PC-9 (cell line): ENCODE measurements at regions of chr2 and their contacts with region 1.

Region 1: DNA sequence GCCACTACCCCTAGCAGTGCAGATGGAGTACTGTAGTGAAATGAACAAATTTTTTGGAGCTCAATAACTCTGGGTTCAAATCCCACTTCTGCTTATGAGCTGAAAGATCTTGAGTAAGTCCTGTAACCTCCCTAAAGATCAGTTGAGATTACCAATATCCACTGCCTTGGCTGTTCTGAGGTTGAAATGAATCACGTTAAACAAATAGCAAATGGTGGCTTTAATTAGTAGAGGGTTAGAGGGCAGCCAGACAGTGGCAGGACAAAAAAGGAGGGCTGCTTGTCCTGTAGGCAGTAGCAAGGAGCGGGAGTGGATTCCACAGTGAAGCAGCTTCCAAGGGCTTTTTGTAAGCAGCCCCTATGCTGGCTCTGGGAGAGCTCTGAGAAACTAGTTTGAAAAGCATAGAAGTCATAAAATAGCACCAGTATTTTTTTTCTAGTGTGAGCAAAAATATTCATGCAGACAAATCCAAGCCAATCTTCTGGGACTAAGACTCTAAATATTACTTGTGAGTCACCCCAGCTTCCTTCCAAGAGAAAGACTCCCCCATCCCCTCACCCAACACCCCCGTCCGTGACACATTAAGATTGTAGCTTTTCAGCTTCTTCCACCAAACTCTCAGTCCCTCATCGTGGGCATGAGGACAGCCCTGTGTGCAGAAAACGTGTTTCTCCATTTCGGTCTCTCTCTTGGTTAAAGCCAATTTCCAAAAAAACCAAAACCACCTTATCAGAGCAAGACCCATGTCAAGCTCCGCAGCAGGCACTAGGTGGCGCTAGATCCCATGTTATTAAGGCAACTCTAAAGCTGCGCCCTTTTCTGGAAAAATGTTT is 123.5 kb upstream of the LGALSL start:
- DNase-seq: peak; percentile 76 to 77
- H3K4me3 ChIP-seq: peak overlapping the region; percentile 44; the same call in 1 of the 2 replicates
- H3K27ac ChIP-seq: no peak overlapping the region; the same call in 1 of the 2 replicates
- H3K4me1 ChIP-seq: peaks cover 22% of the 10 kb centered on the region
- H3K27me3 ChIP-seq: no peaks in the 10 kb centered on the region
- CTCF ChIP-seq: peak; percentile 97

Region 2: DNA sequence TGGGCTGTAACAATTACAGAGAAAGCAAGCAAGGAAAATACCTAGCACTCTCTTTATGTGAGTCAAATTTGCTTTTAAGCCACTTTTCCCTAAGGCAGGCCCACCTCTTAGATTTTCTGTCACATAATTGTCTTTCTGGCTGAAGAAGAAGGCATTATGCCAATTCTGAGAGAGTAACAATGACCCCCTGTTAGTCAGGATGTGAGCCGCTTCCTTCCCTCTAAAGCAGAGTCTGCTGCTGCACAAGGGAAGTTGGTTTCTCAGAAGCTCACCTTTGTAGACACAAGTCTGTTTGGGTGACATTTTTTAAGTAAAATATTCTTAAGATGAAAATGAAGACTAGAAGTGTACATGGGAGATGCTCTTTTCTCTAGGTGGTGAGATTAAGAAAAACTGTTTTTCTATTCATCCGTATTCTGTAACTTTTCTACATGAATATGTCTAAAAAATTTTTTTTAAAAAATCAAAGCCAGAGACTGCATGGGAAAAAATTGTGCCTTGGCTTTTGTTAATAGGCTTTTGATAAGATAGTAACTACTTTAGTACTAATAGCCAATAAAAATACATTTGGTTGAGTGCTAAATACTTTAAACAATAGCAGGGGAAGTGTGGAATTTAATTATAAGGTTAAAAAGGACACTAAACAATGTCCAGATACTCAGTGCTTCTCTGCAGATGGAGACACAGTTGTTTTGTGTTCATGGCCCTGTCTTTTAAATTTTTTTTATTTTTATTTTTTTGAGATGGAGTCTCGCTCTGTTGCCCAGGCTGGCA is 277.8 kb before region 1 on chr2:
- CTCF ChIA-PET with region 1: interaction called, 22 read pairs
- POLR2A ChIA-PET with region 1: no interaction called
- intact Hi-C with region 1: loop called (anchors 1 kb)
- DNase-seq: no peak
- H3K4me3 ChIP-seq: no peak overlapping the region
- H3K27ac ChIP-seq: no peak overlapping the region
- H3K4me1 ChIP-seq: peaks cover 4% of the 10 kb centered on the region; the same call in 1 of the 2 replicates
- H3K27me3 ChIP-seq: no peaks in the 10 kb centered on the region
- CTCF ChIP-seq: no peak

Region 3: DNA sequence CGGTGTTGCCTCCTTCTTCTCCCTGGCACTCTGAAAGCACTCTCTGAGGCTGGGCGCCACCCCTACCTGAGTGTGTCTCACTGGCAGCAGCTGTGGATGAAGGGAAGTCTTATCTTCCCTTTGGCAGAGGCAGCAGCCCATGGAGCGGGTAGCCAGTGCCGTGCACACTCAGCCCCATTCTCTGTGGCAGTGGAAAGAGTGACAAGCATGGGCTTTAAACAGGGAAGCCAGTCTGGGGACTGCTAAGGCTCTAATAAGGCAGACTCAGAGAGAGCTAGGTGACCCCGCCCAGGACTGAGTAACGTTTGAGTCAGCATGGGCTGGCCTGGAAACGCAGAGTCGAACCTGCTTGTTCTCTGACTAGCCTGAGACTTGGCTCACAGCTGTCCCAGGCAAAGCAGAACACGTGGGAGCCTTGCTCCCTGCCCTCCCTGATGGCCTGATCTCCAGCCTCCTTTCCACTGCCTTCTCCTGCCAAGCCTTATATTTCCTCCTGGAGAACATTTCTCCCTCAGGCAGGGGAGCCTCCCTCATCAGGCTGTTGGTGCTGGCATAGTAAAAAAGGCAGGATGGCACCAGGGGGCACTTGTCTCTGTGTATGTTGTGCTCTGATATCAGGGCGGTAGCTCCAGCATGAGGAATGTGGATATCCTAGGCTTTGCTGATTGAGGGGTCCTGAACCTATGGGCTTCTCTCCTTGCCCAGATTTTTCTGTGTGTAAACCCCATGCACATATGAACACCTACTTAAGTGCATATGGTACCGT is 29.6 kb after region 1 on chr2:
- CTCF ChIA-PET with region 1: interaction called, 5 read pairs
- POLR2A ChIA-PET with region 1: no interaction called
- intact Hi-C with region 1: loop called (anchors 2 kb)
- DNase-seq: peak; percentile 93 to 98
- H3K4me3 ChIP-seq: peak overlapping the region; percentile 29; the same call in 1 of the 2 replicates
- H3K27ac ChIP-seq: peak overlapping the region; percentile 94
- H3K4me1 ChIP-seq: peaks cover 67% of the 10 kb centered on the region
- H3K27me3 ChIP-seq: no peaks in the 10 kb centered on the region
- CTCF ChIP-seq: peak; percentile 39; the same call in 1 of the 2 replicates

Region 4: GRCh38 chr2:64562148-64562784 is 231.8 kb after region 1 on chr2:
- CTCF ChIA-PET with region 1: interaction called, 3 read pairs
- POLR2A ChIA-PET with region 1: interaction called, 7 read pairs
- intact Hi-C with region 1: loop called (anchors 1 kb)
- DNase-seq: no peak
- H3K4me3 ChIP-seq: no peak overlapping the region
- H3K27ac ChIP-seq: no peak overlapping the region
- H3K4me1 ChIP-seq: no peaks in the 10 kb centered on the region
- H3K27me3 ChIP-seq: no peaks in the 10 kb centered on the region
- CTCF ChIP-seq: peak; percentile 69

Region 5: GRCh38 chr2:64914735-64915509 is 584.4 kb after region 1 on chr2:
- CTCF ChIA-PET with region 1: interaction called, 3 read pairs
- POLR2A ChIA-PET with region 1: no interaction called
- intact Hi-C with region 1: loop called (anchors 2 kb)
- DNase-seq: no peak
- H3K4me3 ChIP-seq: no peak overlapping the region
- H3K27ac ChIP-seq: no peak overlapping the region
- H3K4me1 ChIP-seq: no peaks in the 10 kb centered on the region
- H3K27me3 ChIP-seq: no peaks in the 10 kb centered on the region
- CTCF ChIP-seq: no peak

Region 6: DNA sequence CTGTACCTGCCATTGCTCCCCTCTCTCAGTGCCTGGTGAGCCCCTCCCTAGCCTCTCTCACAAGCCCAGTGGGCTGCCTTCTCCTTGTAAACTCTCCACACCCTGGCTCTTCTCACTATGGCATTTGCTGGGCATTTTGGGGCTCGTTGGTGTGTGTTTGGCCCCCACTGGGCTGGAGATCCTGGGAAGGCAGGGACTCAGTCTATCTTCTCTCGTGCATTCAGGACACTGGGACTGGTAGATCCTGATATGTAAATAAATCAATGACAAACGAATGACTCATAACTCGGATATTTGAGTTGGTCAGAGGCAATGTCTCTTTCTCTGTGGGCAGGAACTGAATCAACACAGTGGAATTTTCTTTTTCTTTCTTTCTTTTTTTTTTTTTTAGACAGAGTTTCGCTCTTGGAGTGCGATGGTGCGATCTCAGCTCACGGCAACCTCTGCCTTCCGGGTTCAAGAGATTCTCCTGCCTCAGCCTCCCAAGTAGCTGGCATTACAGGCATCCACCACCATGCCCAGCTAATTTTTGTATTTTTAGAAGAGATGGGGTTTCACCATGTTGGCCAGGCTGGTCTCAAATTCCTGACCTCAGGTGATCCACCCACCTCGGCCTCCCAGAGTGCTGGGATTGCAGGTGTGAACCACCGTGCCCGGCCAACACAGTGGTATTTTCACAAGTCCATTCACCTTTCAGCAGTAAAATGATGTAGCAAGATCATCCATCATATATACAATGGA is 1246.5 kb after region 1 on chr2:
- CTCF ChIA-PET with region 1: no interaction called
- POLR2A ChIA-PET with region 1: no interaction called
- intact Hi-C with region 1: loop called (anchors 10 kb)
- DNase-seq: peak; percentile 53 to 98
- H3K4me3 ChIP-seq: peak overlapping the region; percentile 21; the same call in 1 of the 2 replicates
- H3K27ac ChIP-seq: peak overlapping the region; percentile 90
- H3K4me1 ChIP-seq: peaks cover 32% of the 10 kb centered on the region
- H3K27me3 ChIP-seq: no peaks in the 10 kb centered on the region
- CTCF ChIP-seq: no peak